Ascending aorta (tissue), 2 donors: ENCODE measurements at regions of chrX and their contacts with region 1.

Region 1: GRCh38 chrX:118345401-118346257 is at the start of gene WDR44:
- DNase-seq: peak; percentile 77 to 96
- H3K4me3 ChIP-seq: peak within 1 kb of the TSS; percentile 69 to 89
- H3K27ac ChIP-seq: peak within 1 kb of the TSS; percentile 94 to 95
- H3K4me1 ChIP-seq: peaks cover 0 to 3% of the 10 kb centered on the region in 2 donors
- H3K27me3 ChIP-seq: no peaks in the 10 kb centered on the region
- CTCF ChIP-seq: no peak
- total RNA-seq, gene WDR44: 5.9 TPM

Region 2: DNA sequence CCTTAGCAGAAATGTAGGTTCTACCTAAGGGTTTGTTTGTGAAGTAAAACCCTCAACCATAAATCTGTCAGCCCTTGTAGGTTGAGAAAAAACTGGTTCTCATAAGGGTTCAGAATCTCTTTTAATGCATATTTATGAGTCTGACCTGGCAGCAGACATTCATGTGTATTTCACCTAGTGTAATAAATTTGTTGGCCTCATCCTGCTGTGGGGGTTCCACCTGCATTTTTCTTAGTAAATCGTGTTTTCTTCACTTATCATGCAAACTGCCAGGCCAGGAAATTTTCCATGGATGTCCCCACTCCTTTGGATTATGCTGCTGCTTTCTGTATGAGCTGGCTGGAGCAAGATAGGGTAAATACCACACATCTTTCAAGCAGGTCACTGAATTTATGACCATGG is 271.4 kb before region 1 on chrX:
- intact Hi-C with region 1: no loop called
- DNase-seq: no peak
- H3K4me3 ChIP-seq: no peak overlapping the region
- H3K27ac ChIP-seq: no peak overlapping the region
- H3K4me1 ChIP-seq: no peaks in the 10 kb centered on the region
- H3K27me3 ChIP-seq: no peaks in the 10 kb centered on the region
- CTCF ChIP-seq: no peak

Region 3: GRCh38 chrX:118116713-118117550 is 228.7 kb before region 1 on chrX and contains the start of gene KLHL13:
- intact Hi-C with region 1: loop called (anchors 10 kb)
- DNase-seq: peak in 1 of 2 donors; percentile 63
- H3K4me3 ChIP-seq: peak within 1 kb of the TSS; percentile 47 to 83
- H3K27ac ChIP-seq: peak within 1 kb of the TSS; percentile 65 to 86
- H3K4me1 ChIP-seq: no peaks in the 10 kb centered on the region
- H3K27me3 ChIP-seq: no peaks in the 10 kb centered on the region
- CTCF ChIP-seq: no peak
- total RNA-seq, gene KLHL13: 7.0 TPM

Region 4: DNA sequence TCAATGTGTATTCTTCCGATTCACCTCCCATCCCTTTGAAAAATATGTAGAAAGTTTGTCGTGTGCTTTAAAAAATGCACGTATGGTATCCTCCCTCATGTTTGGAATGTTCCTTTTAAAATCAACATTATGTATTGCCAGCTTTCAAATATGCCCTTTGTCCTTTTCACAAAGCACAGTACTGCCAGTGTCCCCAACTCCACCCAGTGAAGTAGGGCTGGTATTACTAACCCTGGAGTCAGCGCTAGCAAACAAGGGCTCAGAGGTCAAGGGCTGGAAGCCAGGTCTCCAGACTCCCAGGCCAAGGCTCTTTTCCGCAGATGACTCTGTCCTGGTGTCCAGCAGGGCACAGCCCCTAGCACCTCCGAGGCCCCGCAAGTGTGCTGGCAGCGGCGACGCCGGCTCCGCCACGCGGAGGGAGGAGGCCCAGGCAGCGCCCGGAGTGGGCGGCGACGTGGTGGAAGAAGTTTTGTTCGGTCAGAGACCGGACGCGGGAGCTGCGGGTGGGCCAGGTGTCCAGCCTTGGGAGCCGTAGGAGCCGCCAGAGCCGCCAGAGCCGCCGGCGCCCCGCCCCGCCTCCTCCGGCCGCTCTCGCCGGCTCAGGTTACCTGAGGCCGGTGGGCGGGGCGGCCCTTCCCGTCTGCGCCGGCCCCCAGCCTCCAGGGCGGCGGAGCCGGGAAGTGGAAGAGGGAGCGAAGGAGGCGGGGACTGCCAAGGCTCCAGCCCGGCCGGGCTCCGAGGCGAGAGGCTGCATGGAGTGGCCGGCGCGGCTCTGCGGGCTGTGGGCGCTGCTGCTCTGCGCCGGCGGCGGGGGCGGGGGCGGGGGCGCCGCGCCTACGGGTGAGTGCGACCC is 381.5 kb after region 1 on chrX and contains the start of gene IL13RA1:
- intact Hi-C with region 1: loop called (anchors 5 kb)
- DNase-seq: peak; percentile 40 to 90
- H3K4me3 ChIP-seq: peak within 1 kb of the TSS; percentile 65 to 76
- H3K27ac ChIP-seq: peak within 1 kb of the TSS; percentile 91 to 92
- H3K4me1 ChIP-seq: peaks cover 0 to 3% of the 10 kb centered on the region in 2 donors
- H3K27me3 ChIP-seq: no peaks in the 10 kb centered on the region
- CTCF ChIP-seq: no peak
- total RNA-seq, gene IL13RA1: 29.6 TPM

Region 5: GRCh38 chrX:118974908-118975671 is 629.5 kb after region 1 on chrX:
- intact Hi-C with region 1: loop called (anchors 5 kb)
- DNase-seq: peak in 1 of 2 donors; percentile 66
- H3K4me3 ChIP-seq: peak overlapping the region; percentile 77 to 83
- H3K27ac ChIP-seq: peak overlapping the region; percentile 76 to 87
- H3K4me1 ChIP-seq: no peaks in the 10 kb centered on the region
- H3K27me3 ChIP-seq: no peaks in the 10 kb centered on the region
- CTCF ChIP-seq: no peak